Esophagus squamous epithelium (tissue), 5 donors: ENCODE measurements at regions of chr11 and their contacts with region 1.

Region 1: DNA sequence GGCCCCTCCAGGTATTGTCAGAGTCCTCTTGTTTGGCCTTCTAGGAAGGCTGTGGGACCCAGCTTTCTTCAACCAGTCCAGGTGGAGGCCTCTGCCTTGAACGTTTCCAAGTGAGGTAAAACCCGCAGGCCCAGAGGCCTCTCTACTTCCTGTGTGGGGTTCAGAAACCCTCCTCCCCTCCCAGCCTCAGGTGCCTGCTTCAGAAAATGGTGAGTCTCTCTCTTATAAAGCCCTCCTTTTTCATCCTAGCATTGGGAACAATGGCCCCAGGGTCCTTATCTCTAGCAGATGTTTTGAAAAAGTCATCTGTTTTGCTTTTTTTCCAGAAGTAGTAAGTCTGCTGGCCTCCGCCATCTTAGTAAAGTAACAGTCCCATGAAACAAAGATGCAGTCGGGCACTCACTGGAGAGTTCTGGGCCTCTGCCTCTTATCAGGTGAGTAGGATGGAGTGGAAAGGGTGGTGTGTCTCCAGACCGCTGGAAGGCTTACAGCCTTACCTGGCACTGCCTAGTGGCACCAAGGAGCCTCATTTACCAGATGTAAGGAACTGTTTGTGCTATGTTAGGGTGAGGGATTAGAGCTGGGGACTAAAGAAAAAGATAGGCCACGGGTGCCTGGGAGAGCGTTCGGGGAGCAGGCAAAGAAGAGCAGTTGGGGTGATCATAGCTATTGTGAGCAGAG is at the start of gene CD3E:
- DNase-seq: no peak
- H3K4me3 ChIP-seq: peak within 1 kb of the TSS in 3 of 4 donors; percentile 22 to 33 (median 31)
- H3K27ac ChIP-seq: peak within 1 kb of the TSS; percentile 20 to 58 (median 40)
- H3K4me1 ChIP-seq: no peaks in the 10 kb centered on the region
- H3K27me3 ChIP-seq: peaks cover 0 to 16% (median 0%) of the 10 kb centered on the region in 4 donors
- CTCF ChIP-seq: no peak
- POLR2A ChIP-seq: peak in 1 of 4 donors; percentile 14
- total RNA-seq, gene CD3E: 1.9 to 7.8 (median 3.1) TPM

Region 2: GRCh38 chr11:118171269-118172062 is 133.2 kb before region 1 on chr11:
- intact Hi-C with region 1: no loop called
- DNase-seq: no peak
- H3K4me3 ChIP-seq: peak overlapping the region in 1 of 4 donors; percentile 23
- H3K27ac ChIP-seq: no peak overlapping the region
- H3K4me1 ChIP-seq: peaks cover 0 to 36% (median 13%) of the 10 kb centered on the region in 3 donors
- H3K27me3 ChIP-seq: peaks cover 0 to 49% (median 0%) of the 10 kb centered on the region in 4 donors
- CTCF ChIP-seq: peak; percentile 53 to 91 (median 80)
- POLR2A ChIP-seq: no peak

Region 3: GRCh38 chr11:118198370-118198769 is 106.3 kb before region 1 on chr11:
- intact Hi-C with region 1: no loop called
- DNase-seq: no peak
- H3K4me3 ChIP-seq: peak overlapping the region in 2 of 4 donors; percentile 19 to 50
- H3K27ac ChIP-seq: peak overlapping the region in 2 of 4 donors; percentile 35 to 46
- H3K4me1 ChIP-seq: peaks cover 0 to 35% (median 15%) of the 10 kb centered on the region in 3 donors
- H3K27me3 ChIP-seq: no peaks in the 10 kb centered on the region
- CTCF ChIP-seq: peak; percentile 83 to 89 (median 88)
- POLR2A ChIP-seq: no peak

Region 4: DNA sequence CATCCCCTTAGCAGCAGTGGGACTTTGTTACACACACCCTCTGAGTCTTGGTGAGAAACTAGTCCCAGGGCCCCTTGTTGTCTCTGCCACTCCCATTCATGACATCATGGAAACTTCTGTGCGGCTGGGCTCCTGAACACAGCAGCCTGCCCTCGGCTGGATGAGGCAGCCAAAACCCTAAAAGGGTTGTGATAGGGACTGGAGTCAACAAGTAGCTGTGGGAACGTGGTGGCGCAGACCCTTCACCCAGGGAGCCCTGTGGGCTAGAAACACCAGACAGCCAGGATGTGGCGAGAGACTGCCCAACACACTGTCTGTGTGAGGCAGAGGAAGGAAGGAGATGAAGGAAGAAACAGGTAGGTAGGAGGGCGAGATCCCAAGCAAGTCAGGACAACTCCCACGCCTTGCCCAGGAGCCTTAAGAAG is 33.9 kb after region 1 on chr11:
- intact Hi-C with region 1: no loop called
- DNase-seq: peak; percentile 4
- H3K4me3 ChIP-seq: peak overlapping the region in 1 of 4 donors; percentile 33
- H3K27ac ChIP-seq: peak overlapping the region in 3 of 4 donors; percentile 35 to 61 (median 40)
- H3K4me1 ChIP-seq: peaks cover 0 to 9% (median 3%) of the 10 kb centered on the region in 3 donors
- H3K27me3 ChIP-seq: peaks cover 0 to 15% (median 0%) of the 10 kb centered on the region in 4 donors
- CTCF ChIP-seq: no peak
- POLR2A ChIP-seq: peak in 1 of 4 donors; percentile 25

Region 5: GRCh38 chr11:118497831-118498230 is 193.1 kb after region 1 on chr11:
- intact Hi-C with region 1: loop called (anchors 10 kb)
- DNase-seq: no peak
- H3K4me3 ChIP-seq: no peak overlapping the region
- H3K27ac ChIP-seq: no peak overlapping the region
- H3K4me1 ChIP-seq: no peaks in the 10 kb centered on the region
- H3K27me3 ChIP-seq: no peaks in the 10 kb centered on the region
- CTCF ChIP-seq: no peak
- POLR2A ChIP-seq: no peak